ENCODE measurements at regions of chr11 and their contacts with region 1.

Region 1: GRCh38 chr11:36746886-36747710 is 149.1 kb upstream of the RAG2 start:
- DNase-seq: peak; percentile 88
- ATAC-seq: peak; percentile 98

Region 2: DNA sequence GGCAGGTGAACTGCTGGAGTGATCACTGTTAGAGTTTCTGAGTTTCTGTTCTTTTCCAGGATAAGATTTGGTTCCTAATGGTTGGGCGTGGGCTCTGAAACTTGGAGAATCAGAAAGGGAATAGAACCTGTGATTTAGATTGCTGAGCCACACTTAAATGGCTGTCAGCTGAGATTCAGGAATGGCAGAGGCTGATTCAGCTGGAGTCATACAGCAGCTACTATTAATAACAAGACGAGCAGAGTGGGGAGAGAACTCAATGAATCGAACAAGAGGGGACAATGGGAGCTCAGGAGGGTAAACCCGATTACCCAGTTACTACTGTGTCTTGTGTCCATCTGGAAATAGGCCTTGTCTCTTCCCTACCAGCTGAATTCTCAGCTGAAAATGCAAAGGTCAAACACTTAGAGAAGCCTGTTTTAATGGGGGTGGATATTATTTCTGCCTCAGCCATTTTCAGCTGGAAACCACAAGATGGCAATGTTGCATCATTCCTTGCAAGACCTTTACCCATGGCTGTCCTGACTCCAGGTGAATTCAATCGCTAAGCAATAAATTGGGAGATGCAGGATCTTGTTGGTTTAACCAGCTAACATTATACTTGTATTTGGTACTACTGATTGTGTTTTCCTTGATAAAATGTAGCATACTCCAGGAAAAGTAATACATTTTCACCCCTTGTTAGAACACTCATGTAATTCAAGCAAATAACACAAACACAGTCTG is 44.6 kb before region 1 on chr11:
- intact Hi-C with region 1: loop called (anchors 5 kb)
- DNase-seq: no peak
- ATAC-seq: peak; percentile 94

Measured in left ventricle myocardium superior (tissue), 1 donor.